ENCODE measurements at regions of chr9 and their contacts with region 1.

Region 1: DNA sequence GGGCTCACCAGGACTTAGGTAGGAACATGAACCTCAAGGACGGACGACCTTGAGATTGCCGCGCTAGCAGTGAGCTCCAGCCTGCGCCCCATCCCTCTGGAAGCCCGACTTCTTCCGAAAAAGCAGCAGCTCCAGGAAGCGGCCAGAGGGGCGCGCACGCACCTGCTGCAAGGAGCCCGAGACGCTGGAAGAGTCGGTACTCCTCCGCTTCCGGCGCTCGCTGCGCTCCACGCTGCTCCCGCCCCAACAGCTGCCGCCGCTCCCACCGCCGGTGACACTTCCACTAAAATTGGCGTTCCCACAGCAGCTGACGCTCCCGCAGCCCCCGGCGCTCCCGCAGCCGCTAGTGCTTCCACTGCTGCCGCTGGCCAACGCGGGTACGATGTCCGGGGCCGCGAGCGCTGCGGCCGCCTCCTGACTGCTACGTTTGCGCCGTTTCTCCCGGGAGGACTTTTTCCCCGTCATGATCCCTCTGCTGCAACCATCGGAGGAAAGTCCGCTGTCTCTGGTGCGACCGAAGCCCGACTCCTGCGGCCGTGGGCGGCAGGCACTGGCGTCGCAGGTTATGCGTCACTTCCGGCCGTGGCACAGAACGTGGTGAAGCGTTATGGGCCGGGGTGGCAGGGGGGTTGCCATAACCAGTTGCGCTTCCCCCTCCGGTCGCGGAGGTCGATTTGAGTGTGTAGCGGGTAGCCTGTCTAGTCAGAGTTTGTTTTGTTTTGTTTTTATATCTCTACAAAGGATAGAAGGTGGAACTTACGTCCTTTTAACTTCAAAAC is at the start of gene CAAP1:
- DNase-seq: peak; percentile 80 to 96 (median 93)
- ATAC-seq: peak; percentile 93
- H3K4me3 ChIP-seq: peak within 1 kb of the TSS; percentile 96
- H3K4me3 Mint-ChIP-seq: peak within 1 kb of the TSS; percentile 98
- H3K27ac ChIP-seq: peak within 1 kb of the TSS; percentile 98 to 99
- H3K27ac Mint-ChIP-seq: peak within 1 kb of the TSS; percentile 99
- H3K4me1 ChIP-seq: peaks cover 19% of the 10 kb centered on the region
- H3K4me1 Mint-ChIP-seq: peaks cover 42% of the 10 kb centered on the region
- H3K27me3 ChIP-seq: no peaks in the 10 kb centered on the region
- H3K27me3 Mint-ChIP-seq: no peaks in the 10 kb centered on the region
- CTCF ChIP-seq: peak; percentile 40
- total RNA-seq, gene CAAP1: 13.4 to 15.1 TPM

Region 2: DNA sequence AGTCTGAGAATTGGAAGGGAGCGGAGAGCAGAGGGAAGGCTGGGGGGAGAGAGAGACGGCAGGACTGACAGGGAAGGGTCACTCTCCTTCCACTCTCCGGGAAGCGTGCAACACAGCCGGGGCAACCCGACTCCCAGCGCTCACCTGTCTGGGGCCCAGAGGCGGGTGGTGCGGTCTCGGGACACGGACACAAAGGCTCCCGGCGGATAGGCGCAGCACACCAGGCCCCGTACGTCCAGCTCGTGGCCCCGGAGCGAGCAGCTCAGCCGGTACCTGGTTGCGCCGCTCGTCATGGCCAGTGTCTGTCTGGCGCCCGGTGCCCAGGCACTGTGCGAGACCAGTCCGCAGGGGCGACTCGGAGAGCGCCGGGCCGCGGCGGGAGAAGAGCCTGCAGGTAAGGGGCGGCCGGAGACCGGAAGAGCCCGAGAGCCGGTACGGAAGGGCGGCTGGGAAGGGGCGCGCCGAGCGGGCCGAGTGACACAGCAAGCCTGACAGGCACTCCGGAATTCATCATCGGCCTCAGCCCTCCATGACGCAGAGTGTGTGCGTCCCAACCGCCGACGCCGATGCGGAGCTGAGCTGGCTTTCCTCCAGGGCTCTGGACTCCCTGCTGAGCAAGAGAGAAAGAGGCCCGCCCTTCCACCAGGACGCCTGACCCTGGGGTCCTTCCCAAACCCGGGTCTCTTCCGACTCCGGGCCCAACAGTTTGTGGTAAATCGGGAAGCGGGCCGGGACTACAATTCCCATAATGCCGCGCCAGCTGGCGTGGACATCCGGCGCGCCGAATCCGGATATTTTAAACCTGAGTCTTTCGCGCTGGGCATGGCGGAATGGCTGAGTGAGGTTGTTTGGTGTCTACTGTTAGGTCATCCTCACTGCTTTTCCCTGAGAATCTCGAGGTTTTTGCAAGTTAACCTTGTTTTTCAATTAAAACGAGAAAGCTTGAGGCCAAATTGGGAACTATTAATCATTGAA is 54.6 kb after region 1 on chr9 and contains the start of gene PLAA:
- CTCF ChIA-PET with region 1: interaction called, 4 read pairs
- POLR2A ChIA-PET with region 1: interaction called, 17 read pairs
- intact Hi-C with region 1: loop called (anchors 1 kb)
- DNase-seq: peak; percentile 62 to 92 (median 86)
- ATAC-seq: peak; percentile 94
- H3K4me3 ChIP-seq: peak within 1 kb of the TSS; percentile 88 to 98
- H3K4me3 Mint-ChIP-seq: peak within 1 kb of the TSS; percentile 95
- H3K27ac ChIP-seq: peak within 1 kb of the TSS; percentile 97 to 100
- H3K27ac Mint-ChIP-seq: peak within 1 kb of the TSS; percentile 99
- H3K4me1 ChIP-seq: peaks cover 35% of the 10 kb centered on the region
- H3K4me1 Mint-ChIP-seq: peaks cover 46% of the 10 kb centered on the region
- H3K27me3 ChIP-seq: no peaks in the 10 kb centered on the region
- H3K27me3 Mint-ChIP-seq: peaks cover 7% of the 10 kb centered on the region
- CTCF ChIP-seq: no peak
- total RNA-seq, gene PLAA: 38.5 to 40.6 TPM

Region 3: GRCh38 chr9:26955921-26956859 is 63.8 kb after region 1 on chr9 and contains the start of gene IFT74:
- CTCF ChIA-PET with region 1: interaction called, 4 read pairs
- POLR2A ChIA-PET with region 1: interaction called, 21 read pairs
- intact Hi-C with region 1: loop called (anchors 1 to 2 kb)
- DNase-seq: peak; percentile 84 to 98 (median 94)
- ATAC-seq: peak; percentile 99
- H3K4me3 ChIP-seq: peak within 1 kb of the TSS; percentile 73
- H3K4me3 Mint-ChIP-seq: peak within 1 kb of the TSS; percentile 89
- H3K27ac ChIP-seq: peak within 1 kb of the TSS; percentile 80 to 82
- H3K27ac Mint-ChIP-seq: peak within 1 kb of the TSS; percentile 92
- H3K4me1 ChIP-seq: peaks cover 13% of the 10 kb centered on the region
- H3K4me1 Mint-ChIP-seq: peaks cover 35% of the 10 kb centered on the region
- H3K27me3 ChIP-seq: no peaks in the 10 kb centered on the region
- H3K27me3 Mint-ChIP-seq: no peaks in the 10 kb centered on the region
- CTCF ChIP-seq: no peak
- total RNA-seq, gene IFT74: 5.8 to 6.3 TPM

Region 4: GRCh38 chr9:27247756-27248155 is 355.3 kb after region 1 on chr9:
- CTCF ChIA-PET with region 1: no interaction called
- POLR2A ChIA-PET with region 1: no interaction called
- intact Hi-C with region 1: no loop called
- DNase-seq: peak in 2 of 9 experiments; percentile 3
- ATAC-seq: no peak
- H3K4me3 ChIP-seq: no peak overlapping the region
- H3K4me3 Mint-ChIP-seq: no peak overlapping the region
- H3K27ac ChIP-seq: no peak overlapping the region
- H3K27ac Mint-ChIP-seq: no peak overlapping the region
- H3K4me1 ChIP-seq: no peaks in the 10 kb centered on the region
- H3K4me1 Mint-ChIP-seq: no peaks in the 10 kb centered on the region
- H3K27me3 ChIP-seq: no peaks in the 10 kb centered on the region
- H3K27me3 Mint-ChIP-seq: peaks cover 13% of the 10 kb centered on the region
- CTCF ChIP-seq: no peak

Measured in CD8-positive, alpha-beta T cell (primary cell).